Activated T-helper 2 cell treated with anti-CD3 and anti-CD28 coated beads, Interferon-gamma antibody, Interleukin-2, Interleukin-4, amounts not matched to agents 10 μg/mL and 5 μg/mL and 100 μg/mL, durations not matched to agents 14 hours and 24 hours and 36 hours (primary cell): ENCODE measurements at regions of chr1 and their contacts with region 1.

Region 1: GRCh38 chr1:200253774-200254495 is 155.9 kb downstream of the ZNF281 start:
- DNase-seq: no peak
- H3K4me3 Mint-ChIP-seq: no peak overlapping the region
- H3K27ac Mint-ChIP-seq: no peak overlapping the region
- H3K4me1 Mint-ChIP-seq: peaks cover 11% of the 10 kb centered on the region
- H3K27me3 Mint-ChIP-seq: peaks cover 33% of the 10 kb centered on the region

Region 2: DNA sequence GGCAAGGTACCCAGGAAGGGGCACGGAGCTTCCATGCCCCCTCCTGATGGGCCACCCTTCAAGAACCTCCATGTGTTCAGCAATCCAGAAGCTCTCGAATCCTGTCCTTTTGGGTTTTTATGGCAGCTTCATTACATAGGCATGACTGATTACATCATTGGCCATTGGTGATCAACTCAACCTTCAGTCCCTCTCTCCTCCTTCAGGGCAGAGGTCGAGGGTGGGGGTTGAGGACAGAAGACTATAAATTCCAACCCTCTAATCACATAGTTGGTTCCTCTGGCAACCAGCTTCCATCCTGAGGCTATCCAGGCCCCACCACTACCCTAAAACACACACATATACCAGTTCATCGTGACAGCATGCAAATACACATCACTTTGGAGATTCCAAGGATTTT is 20.2 kb after region 1 on chr1:
- intact Hi-C with region 1: loop called (anchors 2 kb)
- DNase-seq: no peak
- H3K4me3 Mint-ChIP-seq: no peak overlapping the region
- H3K27ac Mint-ChIP-seq: no peak overlapping the region
- H3K4me1 Mint-ChIP-seq: peaks cover 8% of the 10 kb centered on the region
- H3K27me3 Mint-ChIP-seq: peaks cover 18% of the 10 kb centered on the region

Region 3: GRCh38 chr1:200866521-200866920 is 612.6 kb after region 1 on chr1:
- intact Hi-C with region 1: no loop called
- DNase-seq: no peak
- H3K4me3 Mint-ChIP-seq: no peak overlapping the region
- H3K27ac Mint-ChIP-seq: no peak overlapping the region
- H3K4me1 Mint-ChIP-seq: peaks cover 24% of the 10 kb centered on the region
- H3K27me3 Mint-ChIP-seq: peaks cover 50% of the 10 kb centered on the region

Region 4: GRCh38 chr1:200877839-200878551 is 624.1 kb after region 1 on chr1:
- intact Hi-C with region 1: no loop called
- DNase-seq: no peak
- H3K4me3 Mint-ChIP-seq: no peak overlapping the region
- H3K27ac Mint-ChIP-seq: no peak overlapping the region
- H3K4me1 Mint-ChIP-seq: peaks cover 12% of the 10 kb centered on the region
- H3K27me3 Mint-ChIP-seq: peaks cover 57% of the 10 kb centered on the region